ENCODE measurements at regions of chrX and their contacts with region 1.

Region 1: GRCh38 chrX:102950908-102951866 is 14.1 kb downstream of the RAB40AL start:
- DNase-seq: peak; percentile 63
- H3K4me3 ChIP-seq: no peak overlapping the region
- H3K27ac ChIP-seq: no peak overlapping the region
- H3K4me1 ChIP-seq: no peaks in the 10 kb centered on the region
- H3K27me3 ChIP-seq: no peaks in the 10 kb centered on the region
- CTCF ChIP-seq: peak; percentile 45

Region 2: GRCh38 chrX:103063918-103064434 is 112.8 kb after region 1 on chrX and contains the start of gene BEX1:
- intact Hi-C with region 1: no loop called
- DNase-seq: no peak
- H3K4me3 ChIP-seq: no peak within 1 kb of the TSS
- H3K27ac ChIP-seq: no peak within 1 kb of the TSS
- H3K4me1 ChIP-seq: no peaks in the 10 kb centered on the region
- H3K27me3 ChIP-seq: no peaks in the 10 kb centered on the region
- CTCF ChIP-seq: no peak
- total RNA-seq, gene BEX1: 0.77 to 1.9 TPM

Region 3: DNA sequence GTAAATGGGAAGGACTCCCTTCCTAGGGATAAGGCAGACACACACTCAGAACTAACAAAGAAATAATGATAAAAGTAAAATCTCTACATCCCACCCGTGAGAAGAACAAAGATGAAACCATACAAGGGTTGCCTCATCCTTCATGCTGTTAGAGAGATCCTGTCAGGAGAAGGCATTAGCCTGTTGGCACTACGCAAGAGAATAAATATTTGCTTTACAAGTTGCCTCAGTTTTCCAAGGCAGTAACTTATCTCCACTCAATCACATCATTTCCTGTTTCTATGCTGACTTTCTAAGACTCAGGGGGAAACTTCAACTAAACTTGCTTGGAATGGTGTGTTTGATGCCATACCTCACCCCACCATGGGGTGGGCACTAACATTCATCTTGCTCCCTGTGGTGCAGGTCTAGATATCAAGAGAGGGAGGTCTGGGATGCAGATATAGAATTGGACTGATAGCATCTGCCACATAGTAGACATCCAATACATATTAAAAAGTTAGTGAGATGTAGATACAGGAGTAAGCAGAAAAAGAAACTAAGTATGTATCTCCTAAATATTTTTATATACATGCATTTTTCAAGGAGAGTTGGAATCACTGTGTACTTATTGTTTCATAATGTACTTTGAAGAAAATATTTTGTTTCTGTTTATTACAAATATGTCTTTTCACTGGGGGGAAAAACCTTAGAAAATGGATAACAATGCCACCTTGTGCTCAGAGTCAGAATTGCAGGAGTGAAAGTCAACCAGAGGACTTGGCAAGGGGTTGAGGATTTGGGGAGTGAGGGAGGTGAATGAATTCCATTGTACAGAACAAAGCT is 206.5 kb after region 1 on chrX:
- intact Hi-C with region 1: loop called (anchors 10 kb)
- DNase-seq: peak; percentile 40
- H3K4me3 ChIP-seq: no peak overlapping the region
- H3K27ac ChIP-seq: no peak overlapping the region
- H3K4me1 ChIP-seq: no peaks in the 10 kb centered on the region
- H3K27me3 ChIP-seq: no peaks in the 10 kb centered on the region
- CTCF ChIP-seq: peak; percentile 53

Region 4: DNA sequence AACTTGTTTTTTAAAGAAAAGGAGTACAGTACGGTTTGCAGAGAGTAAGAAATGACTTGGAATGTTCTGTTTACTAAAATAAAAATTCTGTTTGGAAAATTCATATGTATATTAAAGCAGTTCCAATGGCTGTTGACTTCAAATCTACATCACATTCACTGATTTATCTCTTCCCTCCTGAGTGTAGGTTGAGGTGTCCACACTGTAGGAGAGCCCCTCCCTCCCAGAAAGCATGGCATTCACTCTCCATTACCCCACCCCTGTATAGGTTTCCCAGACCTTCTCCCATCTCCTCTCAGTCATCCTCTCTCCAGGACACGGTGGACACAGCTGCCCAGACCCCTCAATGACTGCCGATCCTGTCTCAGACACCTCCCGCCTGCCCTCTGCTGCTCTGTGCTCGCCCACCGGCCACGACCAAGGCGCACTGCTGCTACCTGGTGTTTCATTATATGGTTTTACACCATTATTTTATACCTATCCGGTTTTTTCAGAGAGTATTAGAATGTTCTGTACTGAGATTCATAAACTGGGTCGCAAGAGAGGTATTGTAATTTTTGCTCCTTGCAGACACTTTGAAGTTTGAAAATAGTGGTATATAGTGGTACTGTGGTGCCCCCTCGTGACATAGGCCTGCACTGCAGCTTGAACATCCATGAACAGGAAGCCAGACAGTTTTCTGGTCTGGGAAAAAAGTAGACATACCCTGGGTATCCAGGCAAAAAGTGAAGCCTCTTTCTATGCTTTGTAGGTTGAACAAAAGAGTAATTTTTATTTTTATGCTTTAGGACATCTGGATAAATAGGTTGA is 225.0 kb after region 1 on chrX:
- intact Hi-C with region 1: loop called (anchors 10 kb)
- DNase-seq: peak; percentile 62
- H3K4me3 ChIP-seq: no peak overlapping the region
- H3K27ac ChIP-seq: no peak overlapping the region
- H3K4me1 ChIP-seq: no peaks in the 10 kb centered on the region
- H3K27me3 ChIP-seq: no peaks in the 10 kb centered on the region
- CTCF ChIP-seq: peak; percentile 67